Right ventricle myocardium superior (tissue), 1 donor: ENCODE measurements at regions of chr12 and their contacts with region 1.

Region 1: DNA sequence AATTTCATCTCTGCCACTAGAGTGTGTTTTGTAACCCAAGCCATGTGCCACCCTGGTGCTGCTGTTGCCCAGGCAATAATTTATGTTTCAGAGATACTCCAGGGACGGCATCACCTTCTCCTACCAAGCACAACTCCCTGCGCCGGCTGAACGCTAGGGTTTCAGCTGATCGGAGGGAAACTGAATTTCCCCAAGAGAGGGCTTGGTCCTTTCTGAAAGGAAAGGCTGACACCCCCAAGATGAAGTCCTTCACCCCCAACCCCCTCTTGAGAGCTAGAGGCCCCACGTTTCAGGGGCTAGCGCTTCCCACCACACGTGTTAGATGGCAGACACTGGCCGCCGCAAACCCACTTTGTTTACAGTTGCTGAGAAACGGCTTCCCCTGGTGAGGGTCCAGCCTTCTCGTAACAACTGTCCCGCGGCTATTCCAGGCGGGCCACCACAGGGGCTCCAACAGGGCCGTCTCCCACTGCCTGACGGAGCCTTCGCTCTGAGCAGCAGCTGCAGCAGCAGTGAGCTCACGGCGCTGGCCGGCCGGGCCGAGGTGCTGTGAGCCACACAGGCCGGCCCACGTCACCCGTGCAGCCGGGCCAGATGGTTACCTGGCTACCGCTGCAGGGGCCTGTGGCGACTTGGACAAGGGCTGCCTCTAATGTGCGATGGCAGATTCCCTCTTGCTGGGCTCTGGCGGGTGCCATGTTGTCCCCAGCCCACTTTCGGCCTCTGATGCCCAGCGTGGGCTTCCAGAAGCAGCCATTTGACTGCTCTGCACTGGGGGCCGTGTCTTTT is 66.4 kb downstream of the TESC start:
- DNase-seq: peak; percentile 38
- ATAC-seq: peak; percentile 50

Region 2: GRCh38 chr12:117098361-117099217 is 65.8 kb after region 1 on chr12:
- intact Hi-C with region 1: loop called (anchors 5 kb)
- DNase-seq: peak; percentile 47
- ATAC-seq: peak; percentile 34